H1 (cell line): ENCODE measurements at regions of chr11 and their contacts with region 1.

Region 1: DNA sequence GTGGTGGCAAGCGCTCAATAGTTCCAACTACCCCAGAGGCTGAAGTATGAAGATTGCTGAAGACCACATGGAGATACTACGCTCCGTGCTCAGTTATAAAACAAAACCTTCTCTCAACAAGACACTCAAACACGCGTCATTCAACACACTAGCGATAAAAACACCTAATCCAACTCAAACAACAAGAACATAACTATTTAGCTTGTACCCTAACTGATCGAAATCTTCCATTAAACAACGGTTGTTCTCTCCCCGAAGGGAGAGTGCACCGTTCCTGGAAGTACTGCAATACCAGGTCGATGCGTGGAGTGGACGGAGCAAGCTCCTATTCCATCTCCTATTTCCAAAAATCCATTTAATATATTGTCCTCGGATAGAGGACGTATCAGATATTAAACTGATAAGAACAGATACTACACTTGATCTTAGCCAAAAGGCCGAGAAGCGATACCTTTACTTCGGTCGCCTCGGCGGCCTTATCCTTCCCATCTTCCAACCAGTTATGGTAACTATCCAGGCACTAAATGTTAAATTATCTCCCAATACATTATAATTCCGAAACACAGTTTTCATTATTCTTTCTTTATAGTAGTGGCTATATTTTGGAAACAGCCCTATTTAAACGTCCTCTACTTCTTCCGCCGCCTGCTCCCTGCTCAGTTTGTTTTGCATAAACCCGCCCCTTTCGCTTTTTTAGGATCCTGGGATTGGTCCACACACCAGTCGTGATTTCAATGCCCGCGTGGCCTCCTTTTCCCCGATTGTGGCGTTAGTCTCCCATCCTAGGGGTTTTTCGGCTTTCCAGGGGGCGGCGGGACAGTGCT is 2.2 kb upstream of the WDR74 start:
- DNase-seq: peak; percentile 88
- H3K4me3 ChIP-seq: peak overlapping the region; percentile 40 to 90 (median 55)
- H3K27ac ChIP-seq: peak overlapping the region; percentile 95
- H3K4me1 ChIP-seq: peaks cover 0 to 5% (median 1%) of the 10 kb centered on the region in 4 experiments; a peak in 2 of 7 replicates
- H3K27me3 ChIP-seq: no peaks in the 10 kb centered on the region
- CTCF ChIP-seq: no peak
- EP300 ChIP-seq: 0 out of 3 replicates have a peak, but pooled peaks of 1 of the 2 experiments have one; percentile 63
- POLR2A ChIP-seq: peak; percentile 100
- RAD21 ChIP-seq: no peak

Region 2: GRCh38 chr11:62591448-62592145 is 250.0 kb before region 1 on chr11 and contains the start of gene TUT1:
- CTCF ChIA-PET with region 1: no interaction called
- POLR2A ChIA-PET with region 1: interaction called, 15 read pairs
- DNase-seq: peak; percentile 93 to 97
- H3K4me3 ChIP-seq: peak within 1 kb of the TSS; percentile 89 to 97 (median 94)
- H3K27ac ChIP-seq: peak within 1 kb of the TSS; percentile 72
- H3K4me1 ChIP-seq: peaks cover 0 to 3% (median under 1%) of the 10 kb centered on the region in 4 experiments; a peak in 5 of 7 replicates
- H3K27me3 ChIP-seq: no peaks in the 10 kb centered on the region
- CTCF ChIP-seq: no peak
- EP300 ChIP-seq: peak in 1 of 2 experiments; percentile 71; a peak in 1 of 3 replicates
- POLR2A ChIP-seq: peak; percentile 91 to 93
- RAD21 ChIP-seq: no peak; a peak in 1 of 4 replicates
- total RNA-seq, gene TUT1: 24.6 and 31.5 TPM in 2 replicates

Region 3: DNA sequence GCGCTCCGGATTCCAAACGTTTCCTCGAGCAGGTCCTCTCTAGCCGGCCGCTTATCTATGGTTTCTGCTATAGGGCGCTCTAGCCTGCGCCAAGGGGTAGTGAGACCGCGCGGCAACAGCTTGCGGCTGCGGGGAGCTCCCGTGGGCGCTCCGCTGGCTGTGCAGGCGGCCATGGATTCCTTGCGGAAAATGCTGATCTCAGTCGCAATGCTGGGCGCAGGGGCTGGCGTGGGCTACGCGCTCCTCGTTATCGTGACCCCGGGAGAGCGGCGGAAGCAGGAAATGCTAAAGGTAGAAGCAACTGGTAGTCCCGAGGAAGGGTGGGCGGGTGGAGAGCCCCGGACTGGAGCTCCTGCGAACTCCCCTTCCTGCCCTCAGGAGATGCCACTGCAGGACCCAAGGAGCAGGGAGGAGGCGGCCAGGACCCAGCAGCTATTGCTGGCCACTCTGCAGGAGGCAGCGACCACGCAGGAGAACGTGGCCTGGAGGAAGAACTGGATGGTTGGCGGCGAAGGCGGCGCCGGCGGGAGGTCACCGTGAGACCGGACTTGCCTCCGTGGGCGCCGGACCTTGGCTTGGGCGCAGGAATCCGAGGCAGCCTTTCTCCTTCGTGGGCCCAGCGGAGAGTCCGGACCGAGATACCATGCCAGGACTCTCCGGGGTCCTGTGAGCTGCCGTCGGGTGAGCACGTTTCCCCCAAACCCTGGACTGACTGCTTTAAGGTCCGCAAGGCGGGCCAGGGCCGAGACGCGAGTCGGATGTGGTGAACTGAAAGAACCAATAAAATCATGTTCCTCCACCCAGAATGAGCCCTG is 169.8 kb before region 1 on chr11 and contains the starts of genes LBHD1 and UQCC3:
- CTCF ChIA-PET with region 1: no interaction called
- POLR2A ChIA-PET with region 1: interaction called, 13 read pairs
- DNase-seq: peak; percentile 41 to 88
- H3K4me3 ChIP-seq: peak within 1 kb of the TSS; percentile 88 to 97 (median 92)
- H3K27ac ChIP-seq: peak within 1 kb of the TSS; percentile 63
- H3K4me1 ChIP-seq: peaks cover 2 to 8% (median 2%) of the 10 kb centered on the region in 4 experiments; a peak in 5 of 7 replicates
- H3K27me3 ChIP-seq: no peaks in the 10 kb centered on the region
- CTCF ChIP-seq: no peak
- EP300 ChIP-seq: no peak
- POLR2A ChIP-seq: peak in 1 of 2 experiments; percentile 71; a peak in 2 of 3 replicates
- RAD21 ChIP-seq: peak in 1 of 2 experiments; percentile 1; a peak in 1 of 4 replicates
- total RNA-seq, gene LBHD1: 3.6 and 5.2 TPM in 2 replicates
- total RNA-seq, gene UQCC3: 14.2 and 15.2 TPM in 2 replicates

Region 4: GRCh38 chr11:62753736-62754603 is 87.6 kb before region 1 on chr11 and contains the start of gene ZBTB3:
- CTCF ChIA-PET with region 1: no interaction called
- POLR2A ChIA-PET with region 1: interaction called, 49 read pairs
- DNase-seq: peak; percentile 97 to 99
- H3K4me3 ChIP-seq: peak within 1 kb of the TSS; percentile 74 to 89 (median 82)
- H3K27ac ChIP-seq: peak within 1 kb of the TSS; percentile 86
- H3K4me1 ChIP-seq: peaks cover 4 to 9% (median 6%) of the 10 kb centered on the region in 4 experiments
- H3K27me3 ChIP-seq: no peaks in the 10 kb centered on the region
- CTCF ChIP-seq: no peak
- EP300 ChIP-seq: no peak
- POLR2A ChIP-seq: peak; percentile 37 to 79
- RAD21 ChIP-seq: 0 out of 4 replicates have a peak, but pooled peaks of 1 of the 2 experiments have one; percentile 6
- total RNA-seq, gene ZBTB3: 76.5 and 76.9 TPM in 2 replicates

Region 5: GRCh38 chr11:62794201-62794775 is 47.3 kb before region 1 on chr11:
- CTCF ChIA-PET with region 1: interaction called, 5 read pairs
- POLR2A ChIA-PET with region 1: interaction called, 144 read pairs
- DNase-seq: no peak
- H3K4me3 ChIP-seq: no peak overlapping the region
- H3K27ac ChIP-seq: no peak overlapping the region
- H3K4me1 ChIP-seq: peaks cover 0 to 7% (median 3%) of the 10 kb centered on the region in 4 experiments; a peak in 3 of 7 replicates
- H3K27me3 ChIP-seq: no peaks in the 10 kb centered on the region
- CTCF ChIP-seq: no peak
- EP300 ChIP-seq: no peak
- POLR2A ChIP-seq: no peak
- RAD21 ChIP-seq: no peak

Region 6: GRCh38 chr11:62855571-62856332 is 14.2 kb after region 1 on chr11:
- CTCF ChIA-PET with region 1: interaction called, 3 read pairs
- POLR2A ChIA-PET with region 1: interaction called, 2,104 read pairs
- DNase-seq: peak; percentile 98 to 99
- H3K4me3 ChIP-seq: peak overlapping the region; percentile 74 to 100 (median 90)
- H3K27ac ChIP-seq: peak overlapping the region; percentile 96
- H3K4me1 ChIP-seq: peaks cover 4 to 7% (median 7%) of the 10 kb centered on the region in 4 experiments; a peak in 4 of 7 replicates
- H3K27me3 ChIP-seq: no peaks in the 10 kb centered on the region
- CTCF ChIP-seq: no peak
- EP300 ChIP-seq: no peak
- POLR2A ChIP-seq: peak; percentile 98 to 99
- RAD21 ChIP-seq: no peak

Region 7: GRCh38 chr11:62984246-62985017 is 142.9 kb after region 1 on chr11 and contains the start of gene SLC22A6:
- CTCF ChIA-PET with region 1: no interaction called
- POLR2A ChIA-PET with region 1: no interaction called
- DNase-seq: no peak
- H3K4me3 ChIP-seq: no peak within 1 kb of the TSS
- H3K27ac ChIP-seq: no peak within 1 kb of the TSS
- H3K4me1 ChIP-seq: 0 out of 7 replicates have a peak, but pooled peaks cover 0 to 2% (median 0%) of the 10 kb centered on the region in 4 experiments
- H3K27me3 ChIP-seq: no peaks in the 10 kb centered on the region
- CTCF ChIP-seq: no peak
- EP300 ChIP-seq: no peak
- POLR2A ChIP-seq: no peak
- RAD21 ChIP-seq: no peak
- total RNA-seq, gene SLC22A6: not detected in 2 replicates